ENCODE measurements at regions of chr1 and their contacts with region 1.

Region 1: GRCh38 chr1:89598450-89599331 is 34.2 kb upstream of the LRRC8C start:
- DNase-seq: peak in 1 of 2 experiments; percentile 52
- H3K4me3 ChIP-seq: peak overlapping the region in 1 of 4 experiments; percentile 36; a peak in 2 of 8 replicates
- H3K27ac ChIP-seq: peak overlapping the region; percentile 39; the same call in 1 of the 2 replicates
- H3K4me1 ChIP-seq: peaks cover 2 to 16% (median 10%) of the 10 kb centered on the region in 4 experiments; a peak in 6 of 7 replicates
- H3K27me3 ChIP-seq: no peaks in the 10 kb centered on the region; a peak in 1 of 7 replicates
- CTCF ChIP-seq: peak in 2 of 3 experiments; percentile 36 to 52; a peak in 2 of 4 replicates
- EP300 ChIP-seq: no peak
- POLR2A ChIP-seq: no peak
- RAD21 ChIP-seq: peak; percentile 51 to 52

Region 2: DNA sequence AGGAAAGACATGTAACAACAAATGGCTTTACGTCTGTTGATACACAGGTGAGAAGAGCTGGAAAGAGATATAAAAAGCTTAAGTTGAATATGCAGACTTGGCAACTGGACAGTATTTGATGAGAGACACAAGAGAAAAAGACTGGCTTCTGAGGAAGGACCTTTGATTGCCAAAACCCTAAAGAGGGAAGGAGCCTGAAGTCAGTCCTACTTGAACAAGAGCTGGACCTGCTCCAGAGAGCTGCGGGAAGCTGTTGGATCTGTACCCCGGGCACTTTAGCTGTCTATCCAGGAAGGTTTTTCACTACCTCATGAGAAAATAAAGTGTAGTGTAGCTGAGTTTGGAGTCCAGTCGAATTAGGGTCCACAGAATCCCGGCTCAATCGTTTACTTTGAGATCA is 99.4 kb before region 1 on chr1:
- CTCF ChIA-PET with region 1: no interaction called
- POLR2A ChIA-PET with region 1: no interaction called
- DNase-seq: no peak
- H3K4me3 ChIP-seq: no peak overlapping the region
- H3K27ac ChIP-seq: no peak overlapping the region
- H3K4me1 ChIP-seq: no peaks in the 10 kb centered on the region
- H3K27me3 ChIP-seq: no peaks in the 10 kb centered on the region
- CTCF ChIP-seq: no peak
- EP300 ChIP-seq: no peak
- POLR2A ChIP-seq: no peak
- RAD21 ChIP-seq: no peak

Region 3: GRCh38 chr1:89615676-89616598 is 17.2 kb after region 1 on chr1:
- CTCF ChIA-PET with region 1: interaction called, 18 read pairs
- POLR2A ChIA-PET with region 1: interaction called, 3 read pairs
- DNase-seq: no peak
- H3K4me3 ChIP-seq: no peak overlapping the region
- H3K27ac ChIP-seq: no peak overlapping the region
- H3K4me1 ChIP-seq: no peaks in the 10 kb centered on the region
- H3K27me3 ChIP-seq: no peaks in the 10 kb centered on the region; a peak in 1 of 7 replicates
- CTCF ChIP-seq: peak; percentile 33 to 63 (median 61); a peak in 3 of 4 replicates
- EP300 ChIP-seq: no peak
- POLR2A ChIP-seq: no peak
- RAD21 ChIP-seq: peak; percentile 7 to 26; a peak in 1 of 4 replicates